MCF 10A (cell line): ENCODE measurements at regions of chr10 and their contacts with region 1.

Region 1: DNA sequence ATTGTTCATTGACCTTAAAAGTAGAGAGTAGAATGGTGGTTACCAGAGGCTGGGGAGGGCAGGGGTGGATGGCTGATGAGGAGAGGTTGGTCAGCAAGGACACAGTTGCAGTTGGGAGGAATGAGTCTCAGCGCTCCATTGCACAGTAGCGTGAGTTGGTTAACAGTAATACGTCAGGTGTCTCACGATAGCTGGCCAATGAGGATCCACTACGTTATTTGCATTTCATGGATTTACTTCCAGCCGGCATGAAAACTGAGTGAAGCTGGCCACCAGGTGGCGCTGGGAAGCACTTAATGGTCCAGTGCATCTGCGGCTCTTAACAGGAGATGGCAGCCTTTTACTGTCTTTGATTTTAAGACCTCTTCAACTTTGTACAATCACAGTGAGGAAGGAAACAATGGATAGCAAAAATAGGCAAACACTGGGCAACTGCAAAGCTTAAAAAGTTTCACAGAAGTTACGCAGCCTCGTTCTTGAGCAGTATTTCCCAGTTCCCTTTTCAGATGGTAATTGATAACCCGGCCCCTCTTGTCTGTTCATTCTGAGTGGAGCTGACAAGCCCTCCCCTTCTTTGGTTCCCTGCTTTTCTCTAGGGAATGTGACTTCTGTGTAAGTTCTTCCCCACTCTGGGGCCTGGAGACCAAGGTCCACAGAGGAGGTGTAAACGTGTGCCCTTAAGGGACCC is 23.7 kb downstream of the AKR1E2 start:
- DNase-seq: peak; percentile 95
- H3K4me3 Mint-ChIP-seq: no peak overlapping the region
- H3K27ac Mint-ChIP-seq: peak overlapping the region; percentile 49
- H3K4me1 Mint-ChIP-seq: peaks cover 29% of the 10 kb centered on the region
- H3K27me3 Mint-ChIP-seq: no peaks in the 10 kb centered on the region
- CTCF ChIP-seq: peak; percentile 99

Region 2: DNA sequence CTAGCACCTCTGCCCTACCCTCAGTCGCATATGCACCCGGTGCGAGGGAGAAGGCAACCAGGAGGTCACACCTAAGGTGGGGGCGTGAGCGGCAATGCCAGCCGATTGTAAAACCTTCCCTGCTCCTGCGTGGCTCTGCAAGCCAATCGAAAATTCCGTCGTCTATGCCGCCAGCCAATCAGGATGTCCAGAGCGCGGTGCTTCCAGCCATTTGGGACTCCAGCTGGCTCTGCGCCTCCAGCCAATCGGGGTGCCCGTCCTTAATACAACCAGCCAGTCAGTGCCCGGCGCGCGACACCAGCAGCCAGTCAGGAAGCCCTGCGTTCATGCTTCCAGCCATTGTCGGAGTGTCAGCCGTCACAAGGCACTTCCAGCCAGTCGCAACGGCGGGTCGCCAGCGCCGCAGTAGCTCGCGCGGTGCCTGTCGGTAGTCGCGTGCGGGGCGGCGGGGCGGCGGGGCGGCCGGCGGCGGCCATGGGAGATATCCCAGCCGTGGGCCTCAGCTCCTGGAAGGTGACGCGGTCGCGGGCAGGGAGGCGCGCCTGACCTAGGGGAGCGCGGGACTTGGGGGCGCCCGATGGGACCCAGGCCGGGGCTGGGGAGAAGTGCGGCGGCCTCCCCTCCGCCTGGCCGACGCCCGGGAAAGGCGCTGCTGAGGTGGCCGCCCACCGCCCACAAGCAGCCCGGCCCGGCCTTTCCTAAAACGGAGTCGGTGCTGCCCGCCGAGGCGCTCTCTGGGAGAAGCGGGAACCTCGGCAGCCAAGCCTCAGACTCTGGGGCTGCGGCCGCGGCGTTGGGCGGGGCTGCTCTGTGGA is 23.6 kb before region 1 on chr10 and contains the start of gene AKR1E2:
- CTCF ChIA-PET with region 1: interaction called, 12 read pairs
- POLR2A ChIA-PET with region 1: no interaction called
- intact Hi-C with region 1: no loop called
- DNase-seq: no peak
- H3K4me3 Mint-ChIP-seq: peak within 1 kb of the TSS; percentile 74
- H3K27ac Mint-ChIP-seq: no peak within 1 kb of the TSS
- H3K4me1 Mint-ChIP-seq: no peaks in the 10 kb centered on the region
- H3K27me3 Mint-ChIP-seq: peaks cover 15% of the 10 kb centered on the region
- CTCF ChIP-seq: no peak
- total RNA-seq, gene AKR1E2: 0.29 TPM in 1 of 2 replicates, not detected in the other

Region 3: GRCh38 chr10:4887501-4887900 is 37.8 kb after region 1 on chr10:
- CTCF ChIA-PET with region 1: interaction called, 11 read pairs
- POLR2A ChIA-PET with region 1: interaction called, 3 read pairs
- intact Hi-C with region 1: no loop called
- DNase-seq: no peak
- H3K4me3 Mint-ChIP-seq: no peak overlapping the region
- H3K27ac Mint-ChIP-seq: no peak overlapping the region
- H3K4me1 Mint-ChIP-seq: peaks cover 11% of the 10 kb centered on the region
- H3K27me3 Mint-ChIP-seq: no peaks in the 10 kb centered on the region
- CTCF ChIP-seq: no peak

Region 4: GRCh38 chr10:4981722-4982471 is 132.2 kb after region 1 on chr10:
- CTCF ChIA-PET with region 1: interaction called, 80 read pairs
- POLR2A ChIA-PET with region 1: interaction called, 16 read pairs
- intact Hi-C with region 1: loop called (anchors 1 kb)
- DNase-seq: peak; percentile 56
- H3K4me3 Mint-ChIP-seq: no peak overlapping the region
- H3K27ac Mint-ChIP-seq: no peak overlapping the region
- H3K4me1 Mint-ChIP-seq: peaks cover 7% of the 10 kb centered on the region
- H3K27me3 Mint-ChIP-seq: no peaks in the 10 kb centered on the region
- CTCF ChIP-seq: peak; percentile 43

Region 5: GRCh38 chr10:5283305-5284158 is 433.8 kb after region 1 on chr10:
- CTCF ChIA-PET with region 1: interaction called, 53 read pairs
- POLR2A ChIA-PET with region 1: no interaction called
- intact Hi-C with region 1: loop called (anchors 1 kb)
- DNase-seq: peak; percentile 83
- H3K4me3 Mint-ChIP-seq: peak overlapping the region; percentile 20
- H3K27ac Mint-ChIP-seq: peak overlapping the region; percentile 52
- H3K4me1 Mint-ChIP-seq: peaks cover 20% of the 10 kb centered on the region
- H3K27me3 Mint-ChIP-seq: no peaks in the 10 kb centered on the region
- CTCF ChIP-seq: peak; percentile 55

Region 6: GRCh38 chr10:5434017-5434753 is 584.5 kb after region 1 on chr10:
- CTCF ChIA-PET with region 1: interaction called, 58 read pairs
- POLR2A ChIA-PET with region 1: interaction called, 11 read pairs
- intact Hi-C with region 1: loop called (anchors 1 kb)
- DNase-seq: peak; percentile 64
- H3K4me3 Mint-ChIP-seq: peak overlapping the region; percentile 22
- H3K27ac Mint-ChIP-seq: peak overlapping the region; percentile 75
- H3K4me1 Mint-ChIP-seq: peaks cover 25% of the 10 kb centered on the region
- H3K27me3 Mint-ChIP-seq: no peaks in the 10 kb centered on the region
- CTCF ChIP-seq: peak; percentile 80